ENCODE measurements at regions of chr4 and their contacts with region 1.

Region 1: DNA sequence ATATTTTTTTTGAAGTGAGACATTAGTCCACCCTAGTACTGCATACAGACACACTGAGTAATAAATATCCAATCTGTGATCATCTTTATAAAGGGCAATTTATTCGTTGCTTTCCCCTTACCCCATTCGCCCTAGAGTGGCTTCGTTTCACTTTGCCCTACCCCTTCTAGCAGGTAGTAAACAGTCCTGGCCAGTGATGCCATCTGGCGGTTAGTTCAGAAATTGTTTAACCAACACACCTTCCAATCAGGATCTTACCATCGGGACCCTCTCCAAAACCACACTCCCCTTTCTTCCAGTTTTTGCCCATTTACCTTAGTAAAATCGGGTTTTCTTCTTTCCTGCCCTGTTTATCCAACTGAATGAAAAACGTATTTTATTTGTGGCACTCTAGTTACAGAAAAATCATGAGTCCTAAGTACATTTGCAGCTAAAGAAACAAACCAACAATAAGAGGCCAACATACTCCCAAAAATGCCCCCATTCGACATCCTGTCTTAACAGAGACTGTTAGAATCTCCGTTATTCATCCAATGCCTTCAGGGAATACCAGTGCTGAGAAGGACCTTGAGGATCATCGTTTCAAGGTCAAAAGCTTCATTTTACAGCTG is 2.2 kb downstream of the PPA2 start:
- DNase-seq: peak; percentile 76
- H3K4me3 Mint-ChIP-seq: peak overlapping the region; percentile 97
- H3K27ac Mint-ChIP-seq: peak overlapping the region; percentile 5
- H3K4me1 Mint-ChIP-seq: peaks cover 28% of the 10 kb centered on the region
- H3K27me3 Mint-ChIP-seq: peaks cover 6% of the 10 kb centered on the region

Region 2: DNA sequence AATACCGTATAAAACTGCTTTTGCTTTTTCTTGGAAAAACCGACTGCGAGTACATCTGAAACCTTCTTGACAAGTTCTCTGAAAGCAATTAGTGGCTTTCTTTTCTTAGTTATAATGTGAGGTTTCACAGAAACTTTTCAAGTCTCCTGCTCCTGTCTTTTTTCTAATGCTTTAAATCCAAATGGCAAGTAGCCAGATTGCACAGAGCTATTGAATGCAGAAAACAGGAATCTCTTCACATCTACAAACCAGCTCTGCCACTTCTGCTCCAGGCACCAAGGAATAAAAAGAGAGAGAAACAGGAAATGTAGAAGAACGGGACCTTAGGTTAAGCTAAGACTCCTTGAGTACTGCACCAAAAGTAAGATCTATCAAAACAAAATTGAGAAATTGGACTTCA is 592.3 kb before region 1 on chr4:
- CTCF ChIA-PET with region 1: interaction called, 4 read pairs
- POLR2A ChIA-PET with region 1: interaction called, 10 read pairs
- DNase-seq: no peak
- H3K4me3 Mint-ChIP-seq: no peak overlapping the region
- H3K27ac Mint-ChIP-seq: no peak overlapping the region
- H3K4me1 Mint-ChIP-seq: peaks cover 16% of the 10 kb centered on the region
- H3K27me3 Mint-ChIP-seq: peaks cover 3% of the 10 kb centered on the region

Region 3: DNA sequence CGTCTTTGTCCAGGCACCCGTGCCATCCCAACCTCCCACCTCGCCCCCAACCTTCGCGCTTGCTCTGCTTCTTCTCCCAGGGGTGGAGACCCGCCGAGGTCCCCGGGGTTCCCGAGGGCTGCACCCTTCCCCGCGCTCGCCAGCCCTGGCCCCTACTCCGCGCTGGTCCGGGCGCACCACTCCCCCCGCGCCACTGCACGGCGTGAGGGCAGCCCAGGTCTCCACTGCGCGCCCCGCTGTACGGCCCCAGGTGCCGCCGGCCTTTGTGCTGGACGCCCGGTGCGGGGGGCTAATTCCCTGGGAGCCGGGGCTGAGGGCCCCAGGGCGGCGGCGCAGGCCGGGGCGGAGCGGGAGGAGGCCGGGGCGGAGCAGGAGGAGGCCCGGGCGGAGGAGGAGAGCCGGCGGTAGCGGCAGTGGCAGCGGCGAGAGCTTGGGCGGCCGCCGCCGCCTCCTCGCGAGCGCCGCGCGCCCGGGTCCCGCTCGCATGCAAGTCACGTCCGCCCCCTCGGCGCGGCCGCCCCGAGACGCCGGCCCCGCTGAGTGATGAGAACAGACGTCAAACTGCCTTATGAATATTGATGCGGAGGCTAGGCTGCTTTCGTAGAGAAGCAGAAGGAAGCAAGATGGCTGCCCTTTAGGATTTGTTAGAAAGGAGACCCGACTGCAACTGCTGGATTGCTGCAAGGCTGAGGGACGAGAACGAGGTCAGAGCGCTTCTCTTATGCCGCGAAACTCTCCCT is 325.2 kb before region 1 on chr4 and contains the start of gene TET2:
- CTCF ChIA-PET with region 1: interaction called, 27 read pairs
- POLR2A ChIA-PET with region 1: interaction called, 44 read pairs
- DNase-seq: peak; percentile 86
- H3K4me3 Mint-ChIP-seq: peak within 1 kb of the TSS; percentile 99
- H3K27ac Mint-ChIP-seq: peak within 1 kb of the TSS; percentile 98
- H3K4me1 Mint-ChIP-seq: peaks cover 32% of the 10 kb centered on the region
- H3K27me3 Mint-ChIP-seq: no peaks in the 10 kb centered on the region
- total RNA-seq, gene TET2: 25.0 to 25.9 TPM

Region 4: GRCh38 chr4:105461221-105461620 is 10.4 kb before region 1 on chr4:
- CTCF ChIA-PET with region 1: interaction called, 20 read pairs
- POLR2A ChIA-PET with region 1: interaction called, 3 read pairs
- DNase-seq: no peak
- H3K4me3 Mint-ChIP-seq: no peak overlapping the region
- H3K27ac Mint-ChIP-seq: no peak overlapping the region
- H3K4me1 Mint-ChIP-seq: peaks cover 14% of the 10 kb centered on the region
- H3K27me3 Mint-ChIP-seq: no peaks in the 10 kb centered on the region

Region 5: DNA sequence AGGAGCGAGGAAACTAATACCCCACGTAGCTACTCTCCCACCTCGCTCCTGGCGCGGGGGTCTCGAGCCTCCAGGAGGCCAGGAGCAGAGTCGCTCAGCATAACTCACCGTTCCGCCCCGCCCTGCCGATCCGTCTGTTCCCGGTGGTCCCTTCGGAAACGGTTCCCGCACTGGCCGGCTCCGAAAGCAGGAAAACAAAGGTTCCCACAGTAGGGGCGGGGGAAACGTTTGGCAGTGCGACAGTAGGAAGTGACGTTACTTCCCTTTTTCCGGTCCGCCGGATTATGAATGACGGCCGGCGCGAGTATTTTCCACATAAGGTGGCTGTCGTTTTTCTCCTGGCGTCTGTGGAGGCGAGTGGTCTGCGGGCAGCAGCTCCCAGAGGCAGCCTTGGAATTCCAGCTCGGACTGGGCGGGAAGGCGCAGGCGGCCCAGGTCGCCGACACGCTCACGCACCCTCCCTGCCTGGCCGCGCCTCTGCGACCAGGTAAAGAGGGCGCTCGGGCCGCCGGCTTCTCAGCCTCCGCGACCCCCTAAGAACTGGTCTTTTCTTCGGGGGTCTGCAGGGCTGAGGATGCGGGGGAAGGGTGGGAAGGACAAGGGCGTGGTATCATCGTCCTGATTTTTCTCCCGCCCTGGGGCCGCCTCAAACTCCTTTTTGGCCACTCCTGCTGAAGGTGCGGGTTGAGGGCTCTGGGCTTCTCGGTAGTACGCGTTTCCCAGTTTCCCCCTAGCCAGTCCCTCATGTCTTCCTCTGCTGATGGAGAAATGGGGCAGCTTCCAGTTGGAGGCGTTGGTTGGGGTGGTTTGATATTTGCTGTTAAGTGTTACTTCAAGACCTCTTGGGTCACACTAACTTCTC is 237.1 kb after region 1 on chr4 and contains the starts of genes GSTCD and INTS12:
- CTCF ChIA-PET with region 1: interaction called, 10 read pairs
- POLR2A ChIA-PET with region 1: interaction called, 10 read pairs
- DNase-seq: peak; percentile 89
- H3K4me3 Mint-ChIP-seq: peak within 1 kb of the TSS; percentile 99
- H3K27ac Mint-ChIP-seq: peak within 1 kb of the TSS; percentile 84
- H3K4me1 Mint-ChIP-seq: peaks cover 29% of the 10 kb centered on the region
- H3K27me3 Mint-ChIP-seq: no peaks in the 10 kb centered on the region
- total RNA-seq, gene GSTCD: 9.9 to 13.8 TPM
- total RNA-seq, gene INTS12: 19.2 to 19.4 TPM

Measured in activated CD4-positive, alpha-beta memory T cell treated with anti-CD3 and anti-CD28 coated beads, Interleukin-2, amount 10 ng/mL, durations not matched to agents 7 days and 5 days (primary cell).